Posterior vena cava (tissue), 2 donors: ENCODE measurements at regions of chr10 and their contacts with region 1.

Region 1: DNA sequence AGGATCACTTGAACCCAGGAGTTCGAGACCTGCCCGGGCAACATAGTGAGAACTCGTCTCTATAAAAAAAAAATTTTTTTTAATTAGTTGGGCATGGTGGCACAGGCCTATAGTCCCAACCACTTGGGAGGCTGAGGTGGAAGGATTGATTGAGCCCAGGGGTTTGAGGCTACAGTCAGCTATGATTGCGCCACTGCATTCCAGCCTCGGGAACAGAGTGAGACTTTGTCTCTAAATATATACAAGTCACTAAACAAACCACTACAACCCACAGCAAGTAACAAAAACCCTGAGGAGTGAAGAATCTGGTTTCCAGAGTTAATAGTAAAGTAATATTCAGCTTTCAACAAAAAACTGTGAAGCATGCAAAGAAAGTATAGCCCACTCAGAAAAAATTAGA is 32.7 kb upstream of the HHEX start:
- DNase-seq: no peak

Region 2: DNA sequence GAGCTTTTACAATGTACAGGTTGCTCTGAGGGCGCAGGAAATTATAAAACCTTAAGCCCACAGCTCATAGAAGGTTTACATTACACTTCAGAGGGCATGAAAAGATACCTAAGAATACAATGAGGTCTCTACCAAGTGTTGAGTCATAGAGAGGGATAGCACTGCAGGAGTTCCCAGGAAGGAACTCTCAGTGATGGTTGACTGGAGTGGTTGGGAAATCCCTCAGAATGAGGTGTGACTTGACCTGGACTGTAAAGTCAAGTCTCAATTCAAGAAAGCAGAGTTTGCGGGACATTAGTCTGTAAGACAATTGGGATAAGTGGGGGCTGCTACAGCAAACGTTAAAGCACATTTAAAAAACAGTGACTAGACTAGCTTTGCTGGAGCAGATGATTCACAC is 836.9 kb before region 1 on chr10:
- intact Hi-C with region 1: no loop called
- DNase-seq: no peak

Region 3: GRCh38 chr10:92619368-92619767 is 37.7 kb before region 1 on chr10:
- intact Hi-C with region 1: loop called in 1 of 2 experiments (anchors 1 kb)
- DNase-seq: no peak

Region 4: GRCh38 chr10:92689663-92690210 is 32.7 kb after region 1 on chr10 and contains the start of gene HHEX:
- intact Hi-C with region 1: no loop called
- DNase-seq: peak; percentile 90
- total RNA-seq, gene HHEX: 9.9 to 11.3 TPM